ENCODE measurements at regions of chr16 and their contacts with region 1.

Region 1: DNA sequence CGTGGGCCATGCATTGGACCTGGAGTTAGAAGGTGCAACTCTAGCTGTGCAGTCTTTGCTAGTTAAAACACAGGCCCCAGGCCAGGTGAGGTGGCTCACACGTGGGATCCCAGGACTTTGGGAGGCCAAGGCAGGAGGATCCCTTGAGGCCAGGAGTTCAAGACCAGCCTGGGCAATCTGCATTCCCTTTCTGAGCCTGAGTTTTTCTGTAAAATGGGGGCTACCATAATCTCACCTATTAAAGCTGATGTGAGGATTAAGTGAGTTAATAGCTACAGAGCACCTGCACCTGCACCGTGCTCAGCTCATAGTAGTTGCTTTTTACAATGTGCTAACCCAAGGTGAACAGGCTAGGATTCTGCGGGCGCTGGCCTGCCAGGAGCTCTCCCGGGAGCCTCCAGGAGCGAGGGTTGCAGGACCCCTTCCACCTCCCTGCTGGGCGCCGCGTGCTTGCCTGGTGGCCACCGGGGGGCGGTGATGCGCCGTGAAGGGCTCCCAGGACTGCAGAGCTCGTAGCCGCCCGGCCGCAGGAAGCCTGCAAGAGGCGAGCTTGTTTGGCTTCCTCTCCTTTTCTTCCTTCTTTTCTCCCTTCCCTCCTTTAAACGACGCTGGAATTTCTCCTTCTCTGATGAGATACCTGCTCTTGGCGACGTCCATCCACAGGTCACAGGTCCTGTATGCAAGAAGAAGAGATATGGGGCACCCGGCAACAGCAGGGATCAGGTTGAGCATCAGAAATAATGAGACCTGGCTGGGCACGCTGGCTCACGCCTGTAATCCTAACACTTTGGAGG is 51.3 kb downstream of the ZFP90 start:
- DNase-seq: peak; percentile 79
- H3K4me3 Mint-ChIP-seq: no peak overlapping the region
- H3K27ac Mint-ChIP-seq: no peak overlapping the region
- H3K4me1 Mint-ChIP-seq: peaks cover 6% of the 10 kb centered on the region
- H3K27me3 Mint-ChIP-seq: no peaks in the 10 kb centered on the region
- CTCF ChIP-seq: peak; percentile 98

Region 2: GRCh38 chr16:68564367-68564985 is 25.9 kb before region 1 on chr16:
- CTCF ChIA-PET with region 1: interaction called, 19 read pairs
- POLR2A ChIA-PET with region 1: interaction called, 3 read pairs
- intact Hi-C with region 1: no loop called
- DNase-seq: peak; percentile 13
- H3K4me3 Mint-ChIP-seq: no peak overlapping the region
- H3K27ac Mint-ChIP-seq: no peak overlapping the region
- H3K4me1 Mint-ChIP-seq: no peaks in the 10 kb centered on the region
- H3K27me3 Mint-ChIP-seq: no peaks in the 10 kb centered on the region
- CTCF ChIP-seq: no peak

Region 3: GRCh38 chr16:68636064-68636560 is 45.7 kb after region 1 on chr16:
- CTCF ChIA-PET with region 1: interaction called, 11 read pairs
- POLR2A ChIA-PET with region 1: interaction called, 15 read pairs
- intact Hi-C with region 1: no loop called
- DNase-seq: peak; percentile 82
- H3K4me3 Mint-ChIP-seq: peak overlapping the region; percentile 26
- H3K27ac Mint-ChIP-seq: peak overlapping the region; percentile 76
- H3K4me1 Mint-ChIP-seq: peaks cover 19% of the 10 kb centered on the region
- H3K27me3 Mint-ChIP-seq: no peaks in the 10 kb centered on the region
- CTCF ChIP-seq: no peak

Region 4: GRCh38 chr16:68658258-68659008 is 68.0 kb after region 1 on chr16:
- CTCF ChIA-PET with region 1: interaction called, 60 read pairs
- POLR2A ChIA-PET with region 1: interaction called, 16 read pairs
- intact Hi-C with region 1: no loop called
- DNase-seq: peak; percentile 98
- H3K4me3 Mint-ChIP-seq: peak overlapping the region; percentile 46
- H3K27ac Mint-ChIP-seq: peak overlapping the region; percentile 90
- H3K4me1 Mint-ChIP-seq: peaks cover 26% of the 10 kb centered on the region
- H3K27me3 Mint-ChIP-seq: no peaks in the 10 kb centered on the region
- CTCF ChIP-seq: no peak

Region 5: GRCh38 chr16:68689925-68690324 is 99.5 kb after region 1 on chr16:
- CTCF ChIA-PET with region 1: interaction called, 18 read pairs
- POLR2A ChIA-PET with region 1: no interaction called
- intact Hi-C with region 1: no loop called
- DNase-seq: no peak
- H3K4me3 Mint-ChIP-seq: no peak overlapping the region
- H3K27ac Mint-ChIP-seq: no peak overlapping the region
- H3K4me1 Mint-ChIP-seq: no peaks in the 10 kb centered on the region
- H3K27me3 Mint-ChIP-seq: no peaks in the 10 kb centered on the region
- CTCF ChIP-seq: no peak

Region 6: GRCh38 chr16:68737046-68737729 is 146.8 kb after region 1 on chr16 and contains the start of gene CDH1:
- CTCF ChIA-PET with region 1: interaction called, 23 read pairs
- POLR2A ChIA-PET with region 1: interaction called, 21 read pairs
- intact Hi-C with region 1: loop called (anchors 2 kb)
- DNase-seq: peak; percentile 84
- H3K4me3 Mint-ChIP-seq: peak within 1 kb of the TSS; percentile 79
- H3K27ac Mint-ChIP-seq: peak within 1 kb of the TSS; percentile 69
- H3K4me1 Mint-ChIP-seq: peaks cover 27% of the 10 kb centered on the region
- H3K27me3 Mint-ChIP-seq: no peaks in the 10 kb centered on the region
- CTCF ChIP-seq: no peak
- total RNA-seq, gene CDH1: 37.6 and 37.7 TPM in 2 replicates